Activated T-helper 1 cell treated with anti-CD3 and anti-CD28 coated beads, Interleukin-12 subunit alpha, Interleukin-12 subunit beta, Interleukin-2, Interleukin-4 antibody, amounts not matched to agents 30 ng/mL and 10 ng/mL and 1 ng/mL, durations not matched to agents 14 hours and 24 hours and 36 hours (primary cell): ENCODE measurements at regions of chr5 and their contacts with region 1.

Region 1: DNA sequence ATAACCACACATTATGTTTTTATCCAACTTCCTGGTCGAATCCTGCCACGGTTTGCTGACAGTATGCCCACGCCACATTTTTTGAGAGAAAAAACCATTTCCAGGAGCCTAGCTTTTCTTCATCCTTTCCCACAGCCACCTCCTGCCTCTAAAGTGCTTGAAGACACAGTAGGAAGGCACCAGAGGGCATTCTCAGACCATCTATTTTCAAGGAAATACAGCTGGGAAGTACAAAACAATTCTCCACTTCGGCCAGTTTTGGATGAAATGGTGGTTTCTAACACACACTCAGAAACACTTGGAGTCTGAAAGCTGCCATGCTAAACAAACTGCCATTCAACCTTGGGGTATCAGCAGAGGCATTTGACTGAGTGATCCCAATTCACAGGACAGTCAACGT is 86.3 kb upstream of the RPS23 start:
- DNase-seq: no peak
- H3K4me3 Mint-ChIP-seq: no peak overlapping the region
- H3K27ac Mint-ChIP-seq: no peak overlapping the region
- H3K4me1 Mint-ChIP-seq: peaks cover 68% of the 10 kb centered on the region
- H3K27me3 Mint-ChIP-seq: no peaks in the 10 kb centered on the region

Region 2: DNA sequence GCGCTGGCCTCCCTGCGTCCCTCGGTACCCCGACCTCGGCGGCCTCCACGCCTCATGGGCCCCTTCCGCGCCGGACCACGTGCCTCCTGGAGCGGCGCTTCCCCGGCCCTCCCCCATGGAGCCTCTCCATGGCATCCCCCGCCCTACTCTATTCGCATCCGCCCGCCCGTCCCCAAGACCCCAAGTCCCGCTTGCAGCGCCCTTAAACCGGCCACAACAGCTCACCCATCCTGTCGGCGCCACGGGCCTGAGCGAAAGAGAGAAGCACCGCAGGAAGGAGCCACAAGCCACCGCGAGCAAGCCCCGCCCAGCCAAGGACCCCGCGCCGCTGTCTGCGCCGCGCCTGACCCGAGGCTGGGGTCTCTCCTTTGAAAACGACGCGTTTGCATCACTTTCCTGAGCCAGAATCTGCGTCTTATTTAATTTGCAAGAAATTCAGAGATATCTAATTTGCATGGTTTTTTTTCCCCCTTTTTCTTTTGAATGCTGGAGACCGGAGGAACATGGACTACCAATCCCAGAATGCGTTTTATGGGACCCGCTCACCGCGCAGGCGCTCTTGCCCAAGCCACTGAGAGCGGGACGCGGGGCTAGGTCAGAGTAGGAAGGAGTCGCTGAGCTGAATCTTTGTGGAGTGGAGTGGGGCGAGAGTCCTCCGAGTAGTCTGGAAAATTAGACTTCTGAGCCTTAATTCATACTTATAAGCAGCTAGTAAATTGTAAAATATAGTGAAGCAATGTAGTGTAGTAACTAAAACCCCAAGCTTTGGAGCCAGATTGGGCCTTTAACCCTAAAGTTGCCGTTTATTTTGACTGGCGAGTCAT is 86.2 kb before region 1 on chr5 and contains the start of gene RPS23:
- intact Hi-C with region 1: no loop called
- DNase-seq: peak; percentile 81
- H3K4me3 Mint-ChIP-seq: peak within 1 kb of the TSS; percentile 92
- H3K27ac Mint-ChIP-seq: peak within 1 kb of the TSS; percentile 96
- H3K4me1 Mint-ChIP-seq: peaks cover 34% of the 10 kb centered on the region
- H3K27me3 Mint-ChIP-seq: no peaks in the 10 kb centered on the region
- total RNA-seq, gene RPS23: 2,220 and 2,235 TPM in 2 replicates

Region 3: DNA sequence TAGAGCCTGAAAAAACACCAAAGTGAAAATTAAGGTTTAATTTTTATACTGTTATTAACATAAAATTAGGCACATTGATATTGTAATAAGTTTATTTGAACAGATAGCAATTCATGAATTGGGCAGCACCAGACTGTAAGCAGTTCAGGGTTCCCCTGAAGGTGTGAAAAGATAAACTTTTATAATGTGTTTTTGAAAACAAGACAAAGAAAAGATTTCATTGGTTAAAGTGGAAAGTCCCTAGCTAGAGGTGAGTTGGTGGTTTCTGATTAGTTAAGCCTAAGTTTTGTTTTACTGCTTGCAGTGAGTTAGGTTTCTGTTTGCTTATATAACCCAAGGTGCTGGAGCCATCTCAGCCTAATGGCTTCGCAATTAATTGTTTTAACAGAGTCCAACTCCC is 10.1 kb after region 1 on chr5:
- intact Hi-C with region 1: loop called (anchors 1 kb)
- DNase-seq: no peak
- H3K4me3 Mint-ChIP-seq: peak overlapping the region; percentile 8
- H3K27ac Mint-ChIP-seq: peak overlapping the region; percentile 72
- H3K4me1 Mint-ChIP-seq: peaks cover 38% of the 10 kb centered on the region
- H3K27me3 Mint-ChIP-seq: no peaks in the 10 kb centered on the region

Region 4: DNA sequence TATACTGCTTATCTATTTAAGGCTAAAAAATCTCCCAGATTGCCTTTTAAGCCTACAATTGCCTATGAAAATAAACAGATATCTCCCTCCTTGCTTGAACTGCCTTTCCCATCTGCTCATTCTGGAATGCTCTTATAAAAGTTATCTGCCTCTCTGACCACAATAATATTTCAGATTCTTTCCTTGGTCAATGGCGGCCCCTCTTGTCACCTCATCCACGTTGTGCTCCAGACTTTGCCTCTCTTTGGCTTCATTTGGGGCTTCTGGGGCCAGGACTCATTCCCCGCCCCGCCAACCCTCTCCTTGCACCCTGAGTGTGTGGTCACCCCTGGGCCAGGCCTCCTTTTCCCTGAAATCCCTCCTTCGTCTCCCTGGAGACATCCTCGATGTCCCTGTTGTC is 23.7 kb after region 1 on chr5:
- intact Hi-C with region 1: loop called (anchors 2 kb)
- DNase-seq: no peak
- H3K4me3 Mint-ChIP-seq: no peak overlapping the region
- H3K27ac Mint-ChIP-seq: peak overlapping the region; percentile 89
- H3K4me1 Mint-ChIP-seq: peaks cover 41% of the 10 kb centered on the region
- H3K27me3 Mint-ChIP-seq: no peaks in the 10 kb centered on the region